CD4-positive, alpha-beta memory T cell (primary cell): ENCODE measurements at regions of chr4 and their contacts with region 1.

Region 1: GRCh38 chr4:36351082-36351666 is 69.8 kb downstream of the DTHD1 start:
- DNase-seq: peak; percentile 65 to 73 (median 70)
- H3K4me3 ChIP-seq: no peak overlapping the region
- H3K4me3 Mint-ChIP-seq: no peak overlapping the region
- H3K27ac ChIP-seq: no peak overlapping the region
- H3K27ac Mint-ChIP-seq: peak overlapping the region in 2 of 7 donors; percentile 16 to 59
- H3K4me1 ChIP-seq: no peaks in the 10 kb centered on the region
- H3K4me1 Mint-ChIP-seq: peaks cover 5 to 13% (median 7%) of the 10 kb centered on the region in 4 donors
- H3K27me3 ChIP-seq: no peaks in the 10 kb centered on the region
- H3K27me3 Mint-ChIP-seq: peaks cover 0 to 3% of the 10 kb centered on the region in 2 donors

Region 2: DNA sequence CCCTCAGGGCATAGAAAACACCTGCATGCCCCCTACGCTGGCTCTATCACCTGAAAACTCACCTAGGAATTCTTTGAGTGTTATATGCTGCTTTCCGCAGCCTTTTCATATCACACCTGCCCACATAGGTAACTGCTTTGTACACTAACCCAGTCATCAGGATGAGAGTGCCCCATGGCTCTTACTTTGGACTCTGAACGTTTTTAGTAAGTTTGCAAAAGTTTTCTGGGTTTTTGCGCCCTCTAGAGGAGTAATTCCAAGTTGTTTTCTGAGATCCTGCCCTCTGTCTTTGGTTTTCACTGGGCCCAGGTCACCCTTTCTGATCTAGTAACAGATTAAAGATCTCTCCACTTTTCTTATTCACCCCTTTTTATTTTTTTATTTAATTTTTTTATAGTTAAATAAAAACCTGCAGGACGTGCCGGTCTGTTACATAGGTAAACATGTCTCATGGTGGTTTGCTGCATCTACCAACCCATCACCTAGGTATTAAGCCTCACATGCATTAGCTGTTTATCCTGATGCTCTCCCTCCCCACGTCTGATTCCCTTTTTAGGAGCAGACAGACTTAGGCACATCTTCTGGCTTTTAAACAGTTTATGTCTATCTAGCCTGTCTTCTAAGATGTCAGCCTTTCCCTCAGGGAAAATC is 1032.5 kb after region 1 on chr4:
- CTCF ChIA-PET with region 1: no interaction called
- POLR2A ChIA-PET with region 1: no interaction called
- intact Hi-C with region 1: loop called (anchors 2 kb)
- DNase-seq: peak in 2 of 5 donors; percentile 7 to 9
- H3K4me3 ChIP-seq: no peak overlapping the region
- H3K4me3 Mint-ChIP-seq: no peak overlapping the region
- H3K27ac ChIP-seq: no peak overlapping the region
- H3K27ac Mint-ChIP-seq: no peak overlapping the region
- H3K4me1 ChIP-seq: no peaks in the 10 kb centered on the region
- H3K4me1 Mint-ChIP-seq: no peaks in the 10 kb centered on the region
- H3K27me3 ChIP-seq: no peaks in the 10 kb centered on the region
- H3K27me3 Mint-ChIP-seq: peaks cover 0 to 4% of the 10 kb centered on the region in 2 donors

Region 3: DNA sequence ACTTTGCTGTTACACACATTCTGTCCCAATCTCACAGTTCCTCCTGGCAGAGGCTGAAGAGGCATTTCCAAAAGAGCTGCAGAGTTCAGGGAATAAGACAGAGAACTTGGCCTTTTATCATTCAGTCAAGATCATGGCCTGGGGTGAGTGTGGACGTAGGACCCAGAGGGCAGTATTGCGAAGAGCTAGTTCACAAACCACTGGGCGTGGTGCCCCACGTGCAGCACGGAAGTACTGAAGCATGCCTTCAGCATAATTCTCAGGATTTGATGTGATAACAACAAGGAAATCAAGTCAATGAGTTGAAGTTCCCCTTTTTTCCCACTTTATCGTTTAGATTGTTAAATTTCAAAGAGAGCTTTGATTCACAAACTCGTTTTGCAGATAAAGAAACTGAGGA is 1217.3 kb after region 1 on chr4:
- CTCF ChIA-PET with region 1: no interaction called
- POLR2A ChIA-PET with region 1: no interaction called
- intact Hi-C with region 1: loop called (anchors 5 kb)
- DNase-seq: no peak
- H3K4me3 ChIP-seq: no peak overlapping the region
- H3K4me3 Mint-ChIP-seq: no peak overlapping the region
- H3K27ac ChIP-seq: no peak overlapping the region
- H3K27ac Mint-ChIP-seq: peak overlapping the region in 2 of 7 donors; percentile 26 to 31
- H3K4me1 ChIP-seq: no peaks in the 10 kb centered on the region
- H3K4me1 Mint-ChIP-seq: peaks cover 0 to 2% (median 0%) of the 10 kb centered on the region in 4 donors
- H3K27me3 ChIP-seq: no peaks in the 10 kb centered on the region
- H3K27me3 Mint-ChIP-seq: no peaks in the 10 kb centered on the region